ENCODE measurements at regions of chr5 and their contacts with region 1.

Region 1: DNA sequence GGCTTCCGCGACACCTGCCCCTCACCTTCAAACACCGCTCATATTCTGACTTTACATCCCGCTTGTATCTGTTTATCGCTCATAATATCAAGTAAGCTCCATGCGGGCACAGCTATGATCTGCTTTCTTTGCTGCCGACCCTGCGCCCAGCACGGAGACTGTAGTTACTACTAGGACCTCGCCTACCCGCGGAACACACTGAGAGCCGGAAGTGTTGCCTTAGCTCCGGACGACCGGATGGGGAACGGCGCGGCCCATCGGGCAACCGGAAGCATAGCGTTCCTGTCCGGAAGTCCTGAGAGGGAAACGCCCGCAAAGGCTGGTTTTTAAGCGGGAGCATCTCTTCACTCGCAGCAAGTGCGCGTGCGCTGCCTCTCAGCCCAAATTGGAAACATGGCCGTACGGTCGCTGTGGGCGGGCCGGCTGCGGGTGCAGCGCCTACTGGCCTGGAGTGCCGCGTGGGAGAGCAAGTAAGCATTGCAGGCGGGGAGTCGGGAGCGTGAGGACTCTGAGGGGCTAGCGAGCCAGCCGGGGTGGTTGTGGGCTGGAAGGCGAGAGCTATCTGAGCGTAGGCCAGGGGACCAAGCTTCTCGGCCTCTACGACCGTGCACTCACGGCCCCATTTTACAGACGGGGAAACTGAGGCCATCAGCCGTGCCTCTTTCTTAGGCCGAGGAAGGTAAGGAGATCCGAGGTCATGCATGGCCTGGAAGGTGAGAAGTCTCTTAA is at the start of gene GRPEL2:
- DNase-seq: peak; percentile 92 to 99 (median 94)
- ATAC-seq: peak; percentile 97
- H3K4me3 ChIP-seq: peak within 1 kb of the TSS; percentile 82
- H3K27ac ChIP-seq: peak within 1 kb of the TSS; percentile 92
- H3K4me1 ChIP-seq: peaks cover 7 to 21% of the 10 kb centered on the region in 2 experiments; a peak in 3 of 5 replicates
- H3K27me3 ChIP-seq: no peaks in the 10 kb centered on the region
- CTCF ChIP-seq: 0 out of 6 replicates have a peak, but pooled peaks of 1 of the 3 experiments have one; percentile 3
- EP300 ChIP-seq: no peak
- POLR2A ChIP-seq: peak; percentile 96
- RAD21 ChIP-seq: no peak
- polyA plus RNA-seq, gene GRPEL2: 11.2 to 17.1 TPM

Region 2: DNA sequence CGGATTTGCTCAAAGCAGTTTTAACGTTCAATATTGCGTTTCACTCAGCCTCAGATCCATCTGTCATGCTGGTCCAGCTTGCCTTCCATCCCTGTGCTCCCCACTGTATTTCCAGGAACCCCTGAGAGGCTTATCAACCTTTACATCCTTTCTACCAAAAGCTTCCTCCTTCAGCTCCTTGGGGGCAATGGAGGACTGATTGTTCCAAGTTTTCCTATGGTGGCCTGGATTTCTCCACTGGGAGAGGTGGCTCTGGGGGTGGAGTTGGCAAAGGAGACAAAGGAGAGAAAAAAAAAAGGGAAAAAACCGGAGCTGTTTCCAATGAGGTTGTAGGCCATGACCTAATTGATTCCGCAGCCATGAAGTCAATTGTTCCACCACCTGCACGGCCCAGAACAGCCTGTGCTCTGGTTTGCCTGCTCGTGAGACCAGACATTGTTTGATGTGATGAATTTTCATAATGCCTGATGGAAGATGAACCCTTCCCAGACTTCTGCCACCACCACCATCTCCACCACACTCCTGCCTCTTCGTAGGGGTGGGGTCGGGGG is 149.9 kb before region 1 on chr5:
- CTCF ChIA-PET with region 1: no interaction called
- POLR2A ChIA-PET with region 1: no interaction called
- in situ Hi-C with region 1: no loop called
- intact Hi-C with region 1: no loop called
- DNase-seq: no peak
- ATAC-seq: no peak
- H3K4me3 ChIP-seq: no peak overlapping the region
- H3K27ac ChIP-seq: no peak overlapping the region
- H3K4me1 ChIP-seq: no peaks in the 10 kb centered on the region
- H3K27me3 ChIP-seq: peaks cover 0 to 16% of the 10 kb centered on the region in 2 experiments; a peak in 2 of 5 replicates
- CTCF ChIP-seq: no peak
- EP300 ChIP-seq: no peak
- POLR2A ChIP-seq: no peak
- RAD21 ChIP-seq: no peak

Region 3: GRCh38 chr5:149317281-149318048 is 27.8 kb before region 1 on chr5:
- CTCF ChIA-PET with region 1: no interaction called
- POLR2A ChIA-PET with region 1: interaction called, 12 read pairs
- in situ Hi-C with region 1: no loop called
- intact Hi-C with region 1: loop called (anchors 1 kb)
- DNase-seq: peak; percentile 61 to 73 (median 68)
- ATAC-seq: peak; percentile 46
- H3K4me3 ChIP-seq: no peak overlapping the region
- H3K27ac ChIP-seq: no peak overlapping the region; the same call in 2 of the 3 replicates
- H3K4me1 ChIP-seq: peaks cover 27 to 28% of the 10 kb centered on the region in 2 experiments
- H3K27me3 ChIP-seq: peaks cover 5% of the 10 kb centered on the region in 2 experiments
- CTCF ChIP-seq: peak; percentile 64 to 92 (median 79); a peak in 5 of 6 replicates
- EP300 ChIP-seq: no peak
- POLR2A ChIP-seq: no peak
- RAD21 ChIP-seq: peak; percentile 83 to 93

Region 4: DNA sequence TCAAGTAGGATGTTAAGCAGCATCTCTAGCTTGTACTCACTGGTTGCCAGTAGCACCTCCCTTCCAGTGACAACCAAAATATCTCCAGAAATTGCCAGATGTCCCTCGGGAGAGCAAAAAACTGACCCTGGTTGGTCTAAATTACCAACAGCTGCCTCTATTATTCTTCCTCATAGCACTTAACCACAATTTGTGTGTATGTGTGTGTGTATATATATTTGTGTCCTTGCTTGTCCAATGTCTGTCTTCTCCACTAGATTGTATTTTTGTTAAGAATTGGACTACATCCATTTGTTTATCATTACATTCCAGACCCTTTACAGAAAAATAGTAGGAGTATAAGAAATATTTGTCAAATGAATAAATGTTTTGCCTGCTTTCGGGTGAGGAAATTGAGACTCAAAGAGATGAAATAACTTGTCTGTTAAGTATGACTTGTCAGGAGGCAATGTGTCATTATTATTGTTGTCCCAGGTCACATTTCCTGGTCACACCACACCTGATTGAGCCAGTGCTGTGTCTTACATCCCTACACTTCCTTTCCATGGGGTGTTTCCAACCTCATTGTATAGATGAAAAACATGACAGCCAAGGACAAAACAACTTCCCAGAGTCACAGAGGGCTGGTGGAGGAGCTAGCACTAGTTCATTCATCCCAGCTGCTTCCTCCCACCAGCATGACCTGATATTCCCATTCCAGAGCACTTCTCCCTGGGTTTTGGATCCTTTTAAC is 11.4 kb before region 1 on chr5:
- CTCF ChIA-PET with region 1: no interaction called
- POLR2A ChIA-PET with region 1: interaction called, 11 read pairs
- in situ Hi-C with region 1: no loop called
- intact Hi-C with region 1: no loop called
- DNase-seq: no peak
- ATAC-seq: no peak
- H3K4me3 ChIP-seq: no peak overlapping the region
- H3K27ac ChIP-seq: no peak overlapping the region
- H3K4me1 ChIP-seq: no peaks in the 10 kb centered on the region
- H3K27me3 ChIP-seq: peaks cover 0 to 5% of the 10 kb centered on the region in 2 experiments; a peak in 1 of 5 replicates
- CTCF ChIP-seq: no peak
- EP300 ChIP-seq: no peak
- POLR2A ChIP-seq: no peak
- RAD21 ChIP-seq: no peak

Region 5: DNA sequence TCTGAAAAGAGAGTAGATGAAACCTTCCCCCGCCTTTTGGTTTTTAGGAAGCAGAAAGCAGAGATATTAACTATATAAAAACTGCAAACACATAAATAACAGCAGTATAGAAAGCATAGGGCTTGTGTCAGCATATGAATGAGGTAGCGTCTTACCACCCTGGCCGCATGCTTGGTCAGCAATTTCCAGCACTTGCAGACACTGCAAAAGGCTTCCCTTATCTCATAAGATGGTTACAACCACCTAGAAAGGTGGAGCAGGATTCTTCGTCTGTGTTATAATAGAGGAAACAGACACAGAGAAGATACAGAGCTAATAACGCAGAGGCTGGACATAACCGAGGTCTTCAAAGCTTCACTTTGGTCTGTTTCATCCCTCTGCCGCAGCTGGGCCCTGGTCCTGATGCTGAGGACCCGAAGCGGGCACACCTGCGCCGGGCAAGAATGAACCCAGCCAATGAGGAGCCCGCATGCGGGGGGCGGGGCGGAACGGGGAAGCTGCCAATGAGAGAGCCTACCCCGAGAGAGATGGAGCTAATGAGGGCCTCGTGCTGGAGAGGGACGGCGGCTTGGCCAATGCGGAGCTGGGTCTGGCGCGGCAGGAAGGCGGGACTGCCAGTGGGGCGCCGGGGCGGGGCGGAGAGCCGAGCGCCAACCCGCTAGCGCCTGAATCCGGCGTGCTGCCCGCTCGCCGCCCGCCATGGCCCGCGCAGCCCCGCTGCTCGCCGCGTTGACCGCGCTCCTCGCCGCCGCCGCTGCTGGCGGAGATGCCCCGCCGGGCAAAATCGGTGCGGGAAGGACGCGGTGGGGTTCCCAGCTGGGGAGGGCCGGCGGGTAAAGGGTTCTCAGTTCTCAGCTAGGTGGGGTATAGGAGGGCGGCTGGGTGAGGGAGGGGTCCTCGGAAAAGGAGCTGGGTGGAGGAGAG is 12.3 kb after region 1 on chr5 and contains the start of gene PCYOX1L:
- CTCF ChIA-PET with region 1: no interaction called
- POLR2A ChIA-PET with region 1: interaction called, 87 read pairs
- in situ Hi-C with region 1: no loop called
- intact Hi-C with region 1: no loop called
- DNase-seq: peak; percentile 96 to 98 (median 98)
- ATAC-seq: peak; percentile 97
- H3K4me3 ChIP-seq: peak within 1 kb of the TSS; percentile 71
- H3K27ac ChIP-seq: peak within 1 kb of the TSS; percentile 66
- H3K4me1 ChIP-seq: peaks cover 9 to 14% of the 10 kb centered on the region in 2 experiments; a peak in 3 of 5 replicates
- H3K27me3 ChIP-seq: no peaks in the 10 kb centered on the region
- CTCF ChIP-seq: no peak
- EP300 ChIP-seq: no peak
- POLR2A ChIP-seq: peak; percentile 67
- RAD21 ChIP-seq: no peak
- polyA plus RNA-seq, gene PCYOX1L: 2.3 to 2.4 TPM

Measured in K562 (cell line).